Activated T-helper 2 cell treated with anti-CD3 and anti-CD28 coated beads, Interferon-gamma antibody, Interleukin-2, Interleukin-4, amounts not matched to agents 10 μg/mL and 5 μg/mL and 100 μg/mL, durations not matched to agents 14 hours and 24 hours and 36 hours (primary cell): ENCODE measurements at regions of chr4 and their contacts with region 1.

Region 1: GRCh38 chr4:121736735-121737351 is 28.1 kb downstream of the SMIM43 start:
- DNase-seq: no peak
- H3K4me3 Mint-ChIP-seq: no peak overlapping the region
- H3K27ac Mint-ChIP-seq: no peak overlapping the region
- H3K4me1 Mint-ChIP-seq: no peaks in the 10 kb centered on the region
- H3K27me3 Mint-ChIP-seq: peaks cover 29% of the 10 kb centered on the region

Region 2: GRCh38 chr4:121462660-121463261 is 274.1 kb before region 1 on chr4:
- intact Hi-C with region 1: loop called (anchors 5 kb)
- DNase-seq: no peak
- H3K4me3 Mint-ChIP-seq: no peak overlapping the region
- H3K27ac Mint-ChIP-seq: no peak overlapping the region
- H3K4me1 Mint-ChIP-seq: peaks cover 4% of the 10 kb centered on the region
- H3K27me3 Mint-ChIP-seq: peaks cover 24% of the 10 kb centered on the region

Region 3: DNA sequence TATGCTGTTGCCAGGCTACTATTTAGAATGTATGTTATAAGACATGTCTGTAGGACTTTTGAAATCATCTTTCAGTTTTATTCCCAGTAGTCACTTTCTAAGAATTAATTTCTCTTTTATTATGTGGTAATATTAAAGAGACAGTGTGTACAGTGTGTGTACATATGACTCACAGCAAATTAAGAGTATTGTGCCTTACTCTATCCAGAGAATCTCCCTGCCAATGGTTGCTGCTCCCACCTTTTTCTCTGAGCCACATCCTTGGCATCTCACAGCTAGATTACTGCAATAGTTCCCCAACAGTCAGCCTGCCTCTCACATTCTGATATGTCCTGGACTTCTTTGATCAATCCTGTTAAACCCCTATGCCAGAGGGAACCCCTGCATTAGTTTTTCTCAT is 154.5 kb before region 1 on chr4:
- intact Hi-C with region 1: no loop called
- DNase-seq: no peak
- H3K4me3 Mint-ChIP-seq: no peak overlapping the region
- H3K27ac Mint-ChIP-seq: no peak overlapping the region
- H3K4me1 Mint-ChIP-seq: peaks cover 3% of the 10 kb centered on the region
- H3K27me3 Mint-ChIP-seq: peaks cover 14% of the 10 kb centered on the region

Region 4: DNA sequence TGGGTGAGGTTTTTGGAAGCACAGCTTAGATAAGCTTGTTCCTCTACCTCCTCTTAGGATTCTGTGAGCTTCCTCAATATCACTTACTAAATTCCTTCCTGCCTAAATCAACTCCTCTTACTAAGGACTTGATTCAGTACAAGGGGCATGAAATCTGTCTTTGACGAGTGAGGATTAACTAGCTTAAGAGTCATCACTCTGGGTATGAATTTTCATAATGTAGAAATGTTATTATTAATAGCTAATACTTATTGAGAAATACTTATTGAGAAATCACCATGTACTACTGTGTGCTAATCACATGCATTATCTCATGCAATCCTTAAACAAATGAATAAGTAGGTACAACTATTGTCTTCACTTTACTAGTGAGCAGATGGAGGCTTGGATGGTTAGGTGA is 186.5 kb after region 1 on chr4:
- intact Hi-C with region 1: no loop called
- DNase-seq: no peak
- H3K4me3 Mint-ChIP-seq: no peak overlapping the region
- H3K27ac Mint-ChIP-seq: no peak overlapping the region
- H3K4me1 Mint-ChIP-seq: no peaks in the 10 kb centered on the region
- H3K27me3 Mint-ChIP-seq: peaks cover 12% of the 10 kb centered on the region